ENCODE measurements at regions of chr6 and their contacts with region 1.

Region 1: GRCh38 chr6:75243333-75244062 is at the start of gene COX7A2:
- DNase-seq: peak; percentile 83
- H3K4me3 Mint-ChIP-seq: peak within 1 kb of the TSS; percentile 96
- H3K27ac Mint-ChIP-seq: peak within 1 kb of the TSS; percentile 98
- H3K4me1 Mint-ChIP-seq: peaks cover 24% of the 10 kb centered on the region
- H3K27me3 Mint-ChIP-seq: peaks cover 12% of the 10 kb centered on the region
- total RNA-seq, gene COX7A2: 495 and 497 TPM in 2 replicates

Region 2: GRCh38 chr6:73262671-73263569 is 1980.6 kb before region 1 on chr6 and contains the start of gene KHDC1:
- intact Hi-C with region 1: loop called (anchors 10 kb)
- DNase-seq: peak; percentile 57
- H3K4me3 Mint-ChIP-seq: peak within 1 kb of the TSS; percentile 84
- H3K27ac Mint-ChIP-seq: peak within 1 kb of the TSS; percentile 75
- H3K4me1 Mint-ChIP-seq: peaks cover 38% of the 10 kb centered on the region
- H3K27me3 Mint-ChIP-seq: no peaks in the 10 kb centered on the region
- total RNA-seq, gene KHDC1: 4.8 and 6.4 TPM in 2 replicates

Region 3: GRCh38 chr6:73580247-73581149 is 1663.0 kb before region 1 on chr6:
- intact Hi-C with region 1: loop called (anchors 10 kb)
- DNase-seq: peak; percentile 47
- H3K4me3 Mint-ChIP-seq: peak overlapping the region; percentile 69
- H3K27ac Mint-ChIP-seq: peak overlapping the region; percentile 95
- H3K4me1 Mint-ChIP-seq: peaks cover 27% of the 10 kb centered on the region
- H3K27me3 Mint-ChIP-seq: no peaks in the 10 kb centered on the region

Region 4: GRCh38 chr6:73722318-73723060 is 1521.0 kb before region 1 on chr6:
- intact Hi-C with region 1: loop called (anchors 1 kb)
- DNase-seq: peak; percentile 21
- H3K4me3 Mint-ChIP-seq: peak overlapping the region; percentile 12
- H3K27ac Mint-ChIP-seq: peak overlapping the region; percentile 84
- H3K4me1 Mint-ChIP-seq: peaks cover 43% of the 10 kb centered on the region
- H3K27me3 Mint-ChIP-seq: no peaks in the 10 kb centered on the region

Region 5: DNA sequence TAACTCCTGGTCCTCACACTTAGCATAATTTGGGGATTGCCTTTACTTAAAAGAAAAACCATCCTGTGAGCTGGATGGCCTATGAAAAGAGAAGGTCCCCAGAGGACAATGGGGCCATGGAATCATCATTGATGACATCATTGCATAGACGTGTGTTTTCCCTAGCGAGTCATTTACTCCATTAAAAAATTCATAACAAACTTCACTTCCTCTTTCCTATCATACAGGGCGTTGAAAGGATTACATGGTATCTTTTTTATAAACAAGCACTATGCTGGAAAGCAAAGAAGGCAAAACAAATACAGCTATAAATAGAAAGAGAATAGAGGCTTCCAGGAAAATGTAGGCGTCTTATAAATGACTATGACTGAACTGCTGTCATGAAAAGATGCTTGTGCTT is 26.3 kb before region 1 on chr6:
- intact Hi-C with region 1: loop called (anchors 1 kb)
- DNase-seq: no peak
- H3K4me3 Mint-ChIP-seq: peak overlapping the region; percentile 31
- H3K27ac Mint-ChIP-seq: peak overlapping the region; percentile 32
- H3K4me1 Mint-ChIP-seq: peaks cover 18% of the 10 kb centered on the region
- H3K27me3 Mint-ChIP-seq: peaks cover 10% of the 10 kb centered on the region

Region 6: GRCh38 chr6:75493400-75494064 is 250.0 kb after region 1 on chr6 and contains the start of gene FILIP1:
- intact Hi-C with region 1: loop called (anchors 1 kb)
- DNase-seq: no peak
- H3K4me3 Mint-ChIP-seq: no peak within 1 kb of the TSS
- H3K27ac Mint-ChIP-seq: no peak within 1 kb of the TSS
- H3K4me1 Mint-ChIP-seq: peaks cover 33% of the 10 kb centered on the region
- H3K27me3 Mint-ChIP-seq: peaks cover 53% of the 10 kb centered on the region
- total RNA-seq, gene FILIP1: not detected in 2 replicates

Region 7: GRCh38 chr6:75601304-75602245 is 358.1 kb after region 1 on chr6 and contains the start of gene SENP6:
- intact Hi-C with region 1: loop called (anchors 1 kb)
- DNase-seq: peak; percentile 68
- H3K4me3 Mint-ChIP-seq: peak within 1 kb of the TSS; percentile 100
- H3K27ac Mint-ChIP-seq: peak within 1 kb of the TSS; percentile 99
- H3K4me1 Mint-ChIP-seq: peaks cover 49% of the 10 kb centered on the region
- H3K27me3 Mint-ChIP-seq: no peaks in the 10 kb centered on the region
- total RNA-seq, gene SENP6: 81.2 and 81.7 TPM in 2 replicates

Measured in activated T-helper 1 cell treated with anti-CD3 and anti-CD28 coated beads, Interleukin-12 subunit alpha, Interleukin-12 subunit beta, Interleukin-2, Interleukin-4 antibody, amounts not matched to agents 30 ng/mL and 10 ng/mL and 1 ng/mL, durations not matched to agents 14 hours and 24 hours and 36 hours (primary cell).